ENCODE measurements at regions of chr6 and their contacts with region 1.

Region 1: GRCh38 chr6:107266563-107266962 is 151.2 kb upstream of the BEND3 start:
- DNase-seq: no peak
- H3K4me3 ChIP-seq: no peak overlapping the region
- H3K27ac ChIP-seq: no peak overlapping the region
- H3K4me1 ChIP-seq: peaks cover 4% of the 10 kb centered on the region
- H3K27me3 ChIP-seq: no peaks in the 10 kb centered on the region
- CTCF ChIP-seq: no peak

Region 2: GRCh38 chr6:107196152-107196551 is 70.4 kb before region 1 on chr6:
- CTCF ChIA-PET with region 1: no interaction called
- dilution Hi-C with region 1: loop called (anchors 5 kb)
- in situ Hi-C with region 1: no loop called
- intact Hi-C with region 1: no loop called
- DNase-seq: no peak
- H3K4me3 ChIP-seq: no peak overlapping the region
- H3K27ac ChIP-seq: no peak overlapping the region
- H3K4me1 ChIP-seq: peaks cover 9% of the 10 kb centered on the region
- H3K27me3 ChIP-seq: no peaks in the 10 kb centered on the region
- CTCF ChIP-seq: no peak

Region 3: GRCh38 chr6:107235511-107235910 is 31.1 kb before region 1 on chr6:
- CTCF ChIA-PET with region 1: no interaction called
- dilution Hi-C with region 1: no loop called
- in situ Hi-C with region 1: no loop called
- intact Hi-C with region 1: no loop called
- DNase-seq: peak; percentile 35
- H3K4me3 ChIP-seq: no peak overlapping the region
- H3K27ac ChIP-seq: no peak overlapping the region
- H3K4me1 ChIP-seq: peaks cover 27% of the 10 kb centered on the region
- H3K27me3 ChIP-seq: no peaks in the 10 kb centered on the region
- CTCF ChIP-seq: no peak

Region 4: GRCh38 chr6:107666084-107666981 is 399.8 kb after region 1 on chr6:
- CTCF ChIA-PET with region 1: no interaction called
- dilution Hi-C with region 1: no loop called
- in situ Hi-C with region 1: no loop called
- intact Hi-C with region 1: no loop called
- DNase-seq: no peak
- H3K4me3 ChIP-seq: no peak overlapping the region
- H3K27ac ChIP-seq: no peak overlapping the region
- H3K4me1 ChIP-seq: no peaks in the 10 kb centered on the region
- H3K27me3 ChIP-seq: no peaks in the 10 kb centered on the region
- CTCF ChIP-seq: no peak